ENCODE measurements at regions of chr1 and their contacts with region 1.

Region 1: DNA sequence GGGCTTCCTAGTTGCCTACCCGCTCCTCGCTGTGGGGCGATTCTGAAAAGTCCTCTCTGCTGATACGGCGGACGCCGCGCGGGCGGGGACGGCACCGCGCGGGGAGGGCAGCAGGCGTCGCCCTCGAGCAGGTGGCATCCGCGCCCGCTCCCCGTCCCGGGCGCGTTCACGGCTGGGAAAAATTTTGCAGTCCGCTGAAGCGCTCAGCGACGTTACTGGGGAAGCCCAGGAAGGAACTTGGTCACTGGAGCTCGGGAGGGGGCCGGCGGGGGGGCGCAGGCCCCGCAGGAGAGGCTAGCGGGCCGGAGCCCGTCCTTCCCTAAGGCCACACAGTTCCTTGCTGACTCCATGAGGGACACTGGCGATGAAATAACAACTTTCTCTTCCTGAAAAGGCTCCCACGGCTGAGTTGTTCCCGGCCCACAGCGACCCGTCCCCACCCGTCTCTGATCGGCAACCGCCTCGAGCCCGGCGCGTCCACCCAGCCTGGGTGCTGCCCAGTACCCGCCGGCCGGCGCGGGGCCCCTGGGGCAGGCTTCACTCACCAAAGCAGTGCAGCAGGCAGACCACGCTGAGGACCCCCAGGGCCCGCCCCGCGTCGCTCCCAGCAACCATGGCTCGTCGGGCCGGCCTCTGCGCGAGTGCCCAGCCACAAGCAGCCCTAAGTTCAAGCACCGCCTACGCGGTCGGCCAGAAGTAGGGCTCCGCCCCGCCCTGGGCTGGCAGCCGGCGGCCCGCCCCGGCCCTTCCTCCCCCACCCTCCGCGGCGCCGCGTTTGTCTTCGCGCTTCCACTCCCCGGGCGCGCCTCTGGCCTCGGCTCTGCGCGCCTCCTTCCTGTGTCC is at the start of gene CD58:
- DNase-seq: peak; percentile 93 to 96 (median 95)
- ATAC-seq: peak; percentile 83 to 95 (median 92)
- H3K4me3 ChIP-seq: peak within 1 kb of the TSS; percentile 79 to 99 (median 92)
- H3K27ac ChIP-seq: peak within 1 kb of the TSS; percentile 98 to 100 (median 99)
- H3K4me1 ChIP-seq: peaks cover 3 to 86% (median 49%) of the 10 kb centered on the region in 12 donors
- H3K27me3 ChIP-seq: no peaks in the 10 kb centered on the region
- CTCF ChIP-seq: peak; percentile 58 to 85 (median 72)
- POLR2A ChIP-seq: peak in 1 of 2 donors; percentile 83
- total RNA-seq, gene CD58: 19.6 to 37.5 (median 27.1) TPM

Region 2: GRCh38 chr1:116504308-116505156 is 66.0 kb before region 1 on chr1:
- intact Hi-C with region 1: loop called in 1 of 10 experiments (anchors 5 kb)
- DNase-seq: peak; percentile 60 to 86 (median 80)
- ATAC-seq: peak; percentile 41 to 89 (median 82)
- H3K4me3 ChIP-seq: no peak overlapping the region
- H3K27ac ChIP-seq: peak overlapping the region in 11 of 12 donors; percentile 22 to 91 (median 57)
- H3K4me1 ChIP-seq: peaks cover 0 to 71% (median 12%) of the 10 kb centered on the region in 12 donors
- H3K27me3 ChIP-seq: no peaks in the 10 kb centered on the region
- CTCF ChIP-seq: no peak
- POLR2A ChIP-seq: no peak

Region 3: DNA sequence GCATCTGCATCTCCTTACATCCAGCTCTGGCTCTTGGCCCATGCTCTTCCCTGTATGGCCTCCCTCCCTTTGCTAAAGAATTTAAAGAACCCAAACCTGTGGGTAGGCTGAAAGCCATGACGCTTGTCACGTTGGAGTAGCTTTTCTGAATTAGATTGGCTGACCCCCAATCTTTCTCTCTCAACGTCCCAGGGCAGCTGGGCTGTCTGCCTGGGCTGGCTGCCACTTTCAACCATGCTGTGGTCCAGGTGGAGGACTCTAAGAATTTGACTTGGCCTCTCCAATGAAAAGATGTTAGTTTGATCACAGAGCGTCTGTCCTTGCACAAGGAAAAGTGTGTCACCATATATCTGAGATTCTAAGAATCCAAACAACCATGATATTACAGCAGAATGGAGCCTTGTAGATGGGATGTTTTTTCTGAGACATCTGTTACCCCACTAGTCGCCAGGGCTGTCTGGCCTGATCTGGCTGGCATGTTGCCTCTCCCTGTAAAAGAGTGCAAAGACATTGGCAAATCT is 103.5 kb after region 1 on chr1:
- intact Hi-C with region 1: loop called in 8 of 10 experiments (anchors 1 to 5 kb)
- DNase-seq: no peak
- ATAC-seq: no peak
- H3K4me3 ChIP-seq: no peak overlapping the region
- H3K27ac ChIP-seq: no peak overlapping the region
- H3K4me1 ChIP-seq: peaks cover 0 to 10% (median 0%) of the 10 kb centered on the region in 12 donors
- H3K27me3 ChIP-seq: peaks cover 0 to 6% (median 0%) of the 10 kb centered on the region in 9 donors
- CTCF ChIP-seq: no peak
- POLR2A ChIP-seq: no peak

Region 4: DNA sequence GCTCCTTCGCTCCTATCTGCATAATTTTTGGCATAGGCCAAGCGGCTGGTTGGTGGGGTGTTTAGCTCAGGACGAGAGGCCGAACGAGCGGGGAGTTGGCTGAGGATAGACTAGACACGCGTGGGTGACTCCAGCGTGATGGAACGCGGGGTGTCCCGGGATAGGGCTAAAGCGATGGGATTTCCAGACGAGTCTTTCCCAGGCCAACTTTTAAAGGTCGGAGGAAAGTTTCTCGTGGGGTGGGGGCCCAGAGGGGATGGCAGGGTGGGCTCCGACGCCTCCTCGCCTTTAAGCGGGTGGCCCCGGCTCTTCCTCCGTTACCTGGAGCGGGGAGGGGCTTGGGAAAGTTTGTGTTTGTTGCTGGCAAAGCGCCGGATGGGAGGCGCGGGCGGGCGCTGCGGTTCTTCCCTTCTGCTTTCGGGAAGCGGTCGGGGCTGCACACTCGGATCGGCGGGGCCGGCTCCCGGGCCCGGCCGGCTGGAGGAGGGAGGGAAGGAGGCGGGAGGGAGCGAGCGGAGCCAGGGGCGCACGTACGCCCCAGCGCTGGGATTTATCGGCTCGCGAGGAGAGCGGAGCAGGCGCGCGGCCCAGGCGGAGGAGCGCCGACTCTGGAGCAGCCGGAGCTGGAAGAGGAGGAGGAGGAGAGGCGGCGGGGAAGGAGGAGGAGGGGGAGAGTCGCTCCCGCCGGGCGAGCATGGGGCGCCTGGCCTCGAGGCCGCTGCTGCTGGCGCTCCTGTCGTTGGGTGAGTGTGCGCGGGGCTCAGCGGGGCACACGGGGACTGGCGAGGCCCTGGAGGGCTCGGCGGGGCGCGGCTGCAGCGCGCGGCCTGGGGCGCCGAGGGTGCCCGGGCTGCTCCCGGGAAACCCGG is 339.2 kb after region 1 on chr1 and contains the start of gene PTGFRN:
- intact Hi-C with region 1: loop called in 1 of 10 experiments (anchors 10 kb)
- DNase-seq: peak; percentile 73 to 87 (median 83)
- ATAC-seq: peak; percentile 47 to 77 (median 72)
- H3K4me3 ChIP-seq: peak within 1 kb of the TSS; percentile 57 to 91 (median 78)
- H3K27ac ChIP-seq: peak within 1 kb of the TSS; percentile 51 to 96 (median 91)
- H3K4me1 ChIP-seq: peaks cover 0 to 43% (median 23%) of the 10 kb centered on the region in 12 donors
- H3K27me3 ChIP-seq: peaks cover 0 to 17% (median 0%) of the 10 kb centered on the region in 9 donors
- CTCF ChIP-seq: no peak
- POLR2A ChIP-seq: peak in 1 of 2 donors; percentile 21
- total RNA-seq, gene PTGFRN: 59.3 to 231 (median 137) TPM

Measured in heart left ventricle (tissue), 16 donors.